Mammary epithelial cell (primary cell): ENCODE measurements at regions of chr11 and their contacts with region 1.

Region 1: GRCh38 chr11:58513747-58514367 is 6.0 kb upstream of the OR5B21 start:
- DNase-seq: peak; percentile 64
- H3K4me3 ChIP-seq: no peak overlapping the region
- H3K27ac ChIP-seq: no peak overlapping the region
- H3K4me1 ChIP-seq: no peaks in the 10 kb centered on the region
- H3K27me3 ChIP-seq: no peaks in the 10 kb centered on the region
- CTCF ChIP-seq: peak; percentile 76

Region 2: DNA sequence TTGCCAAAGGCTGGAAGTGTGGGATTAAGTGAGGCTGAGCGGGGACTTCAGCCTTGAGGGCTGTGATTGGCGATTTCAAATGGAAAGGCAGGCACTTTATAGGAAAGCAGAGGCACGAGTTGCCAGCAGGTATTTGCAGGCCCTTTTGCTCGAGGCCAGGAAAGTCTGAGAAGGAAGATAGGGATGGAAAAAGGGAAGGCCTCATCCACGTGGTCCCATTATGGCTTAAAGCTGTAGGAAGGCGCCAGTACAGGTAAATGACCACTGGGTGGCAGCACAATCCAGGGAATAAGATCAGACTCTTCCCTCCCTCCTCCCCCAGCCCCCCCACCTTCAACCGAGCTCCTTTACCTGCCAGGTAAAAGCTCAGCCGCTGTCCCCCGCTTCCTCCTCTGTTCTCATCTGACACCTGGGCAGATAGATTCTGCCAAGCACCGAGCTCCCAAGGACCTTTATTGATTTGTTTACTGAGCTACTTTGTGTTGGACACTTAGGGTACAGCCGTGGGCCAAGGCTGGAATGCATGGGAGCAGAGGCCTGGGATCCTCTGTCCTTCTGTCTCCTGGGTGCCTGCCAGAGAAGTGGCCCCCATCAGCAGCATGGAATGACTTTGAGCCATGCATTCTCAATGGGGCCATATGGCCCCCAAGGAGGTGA is 1168.2 kb before region 1 on chr11:
- CTCF ChIA-PET with region 1: no interaction called
- dilution Hi-C with region 1: no loop called
- in situ Hi-C with region 1: loop called in 1 of 2 experiments (anchors 25 kb)
- intact Hi-C with region 1: loop called (anchors 2 kb)
- DNase-seq: peak; percentile 60
- H3K4me3 ChIP-seq: no peak overlapping the region
- H3K27ac ChIP-seq: no peak overlapping the region
- H3K4me1 ChIP-seq: no peaks in the 10 kb centered on the region
- H3K27me3 ChIP-seq: no peaks in the 10 kb centered on the region
- CTCF ChIP-seq: peak; percentile 57 to 69

Region 3: GRCh38 chr11:57567515-57568329 is 946.1 kb before region 1 on chr11 and contains the start of gene UBE2L6:
- CTCF ChIA-PET with region 1: no interaction called
- dilution Hi-C with region 1: no loop called
- in situ Hi-C with region 1: no loop called
- intact Hi-C with region 1: loop called (anchors 5 kb)
- DNase-seq: no peak
- H3K4me3 ChIP-seq: peak within 1 kb of the TSS; percentile 77 to 96 (median 90)
- H3K27ac ChIP-seq: peak within 1 kb of the TSS; percentile 44
- H3K4me1 ChIP-seq: peaks cover 27% of the 10 kb centered on the region
- H3K27me3 ChIP-seq: no peaks in the 10 kb centered on the region
- CTCF ChIP-seq: no peak
- total RNA-seq, gene UBE2L6: 34.2 to 46.8 TPM

Region 4: GRCh38 chr11:57667736-57668435 is 846.0 kb before region 1 on chr11 and contains the start of gene ZDHHC5:
- CTCF ChIA-PET with region 1: no interaction called
- dilution Hi-C with region 1: no loop called
- in situ Hi-C with region 1: no loop called
- intact Hi-C with region 1: loop called (anchors 5 kb)
- DNase-seq: peak; percentile 99
- H3K4me3 ChIP-seq: peak within 1 kb of the TSS; percentile 99 to 100 (median 99)
- H3K27ac ChIP-seq: peak within 1 kb of the TSS; percentile 95
- H3K4me1 ChIP-seq: peaks cover 20% of the 10 kb centered on the region
- H3K27me3 ChIP-seq: no peaks in the 10 kb centered on the region
- CTCF ChIP-seq: peak; percentile 16 to 52
- total RNA-seq, gene ZDHHC5: 81.7 to 101 TPM

Region 5: DNA sequence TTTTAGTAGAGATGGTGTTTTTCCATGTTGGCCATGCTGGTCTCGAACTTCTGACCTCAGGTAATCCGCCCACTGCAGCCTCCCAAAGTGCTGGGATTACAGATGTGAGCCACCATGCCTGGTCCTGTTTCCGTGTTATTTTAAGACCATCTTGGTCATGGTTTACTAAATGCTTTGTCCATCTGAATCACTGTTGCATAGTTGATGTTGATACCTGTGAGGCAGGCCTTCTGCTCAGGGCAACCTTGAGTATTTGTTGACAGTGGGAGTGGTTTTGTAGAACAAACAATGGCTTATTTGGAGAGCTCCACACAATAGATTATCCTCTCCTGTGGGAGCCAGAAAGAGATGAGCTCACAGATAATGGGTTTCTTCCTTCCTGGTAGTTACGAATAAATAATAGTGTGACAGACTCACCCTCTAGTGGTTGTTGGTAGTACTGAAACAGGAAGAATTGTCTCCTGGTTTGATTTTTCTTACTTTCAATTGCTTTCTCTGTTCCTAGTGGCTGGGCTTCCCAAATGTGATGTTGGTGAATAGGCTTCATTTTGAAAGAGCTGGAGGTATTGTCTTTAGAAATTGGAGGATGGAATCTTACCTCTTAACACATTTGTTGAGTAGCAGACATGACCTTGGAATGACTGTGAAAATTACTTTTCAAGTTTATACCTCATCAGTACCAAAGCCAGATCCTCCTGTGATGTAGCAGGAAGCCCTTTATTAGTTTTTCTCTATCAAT is 713.2 kb before region 1 on chr11:
- CTCF ChIA-PET with region 1: no interaction called
- dilution Hi-C with region 1: loop called (anchors 25 kb)
- in situ Hi-C with region 1: loop called in 1 of 2 experiments (anchors 25 kb)
- intact Hi-C with region 1: loop called (anchors 1 kb)
- DNase-seq: peak; percentile 86
- H3K4me3 ChIP-seq: no peak overlapping the region
- H3K27ac ChIP-seq: peak overlapping the region; percentile 84
- H3K4me1 ChIP-seq: peaks cover 30% of the 10 kb centered on the region
- H3K27me3 ChIP-seq: no peaks in the 10 kb centered on the region
- CTCF ChIP-seq: peak; percentile 74 to 80

Region 6: GRCh38 chr11:57842873-57843272 is 671.0 kb before region 1 on chr11:
- CTCF ChIA-PET with region 1: no interaction called
- dilution Hi-C with region 1: no loop called
- in situ Hi-C with region 1: no loop called
- intact Hi-C with region 1: loop called (anchors 2 kb)
- DNase-seq: no peak
- H3K4me3 ChIP-seq: no peak overlapping the region
- H3K27ac ChIP-seq: no peak overlapping the region
- H3K4me1 ChIP-seq: no peaks in the 10 kb centered on the region
- H3K27me3 ChIP-seq: no peaks in the 10 kb centered on the region
- CTCF ChIP-seq: no peak

Region 7: DNA sequence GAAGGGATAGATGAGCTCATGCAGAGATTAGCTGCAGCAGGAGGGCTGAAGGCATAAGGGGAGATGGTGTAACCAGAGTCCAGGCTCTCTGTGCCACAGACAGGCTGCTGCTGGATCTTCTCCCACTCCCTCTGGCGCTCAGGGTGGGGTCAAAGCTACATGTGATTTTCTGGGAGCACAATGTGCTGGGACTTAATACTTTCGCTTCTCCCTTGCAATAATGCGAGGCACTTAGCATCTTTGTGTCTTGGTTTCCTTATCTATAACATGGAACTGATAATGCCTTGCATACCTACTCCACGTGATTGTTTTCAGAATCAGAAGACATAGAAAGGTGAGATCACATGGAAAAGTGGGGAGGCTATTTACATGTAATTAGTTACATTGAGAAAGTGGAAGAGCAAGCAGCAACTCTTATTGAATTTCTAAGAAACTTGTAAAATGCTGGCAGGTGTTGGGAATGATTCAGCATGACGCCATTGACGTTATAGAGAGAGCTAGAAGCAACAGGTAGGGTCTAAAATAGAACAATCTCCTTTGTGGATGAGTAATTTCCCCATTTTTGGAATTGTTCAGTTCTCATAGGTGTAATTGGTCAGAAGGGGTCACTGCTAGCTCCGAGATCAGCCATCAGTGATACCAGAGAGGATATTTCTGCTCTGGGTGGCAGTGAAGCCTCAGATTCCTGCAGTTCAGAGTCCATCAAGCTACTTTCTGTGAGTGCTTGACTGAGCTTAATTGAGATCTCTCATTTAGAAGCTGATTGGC is 380.4 kb before region 1 on chr11:
- CTCF ChIA-PET with region 1: no interaction called
- dilution Hi-C with region 1: no loop called
- in situ Hi-C with region 1: no loop called
- intact Hi-C with region 1: loop called (anchors 10 kb)
- DNase-seq: peak; percentile 71
- H3K4me3 ChIP-seq: no peak overlapping the region
- H3K27ac ChIP-seq: no peak overlapping the region
- H3K4me1 ChIP-seq: no peaks in the 10 kb centered on the region
- H3K27me3 ChIP-seq: no peaks in the 10 kb centered on the region
- CTCF ChIP-seq: no peak